ENCODE measurements at regions of chr7 and their contacts with region 1.

Region 1: DNA sequence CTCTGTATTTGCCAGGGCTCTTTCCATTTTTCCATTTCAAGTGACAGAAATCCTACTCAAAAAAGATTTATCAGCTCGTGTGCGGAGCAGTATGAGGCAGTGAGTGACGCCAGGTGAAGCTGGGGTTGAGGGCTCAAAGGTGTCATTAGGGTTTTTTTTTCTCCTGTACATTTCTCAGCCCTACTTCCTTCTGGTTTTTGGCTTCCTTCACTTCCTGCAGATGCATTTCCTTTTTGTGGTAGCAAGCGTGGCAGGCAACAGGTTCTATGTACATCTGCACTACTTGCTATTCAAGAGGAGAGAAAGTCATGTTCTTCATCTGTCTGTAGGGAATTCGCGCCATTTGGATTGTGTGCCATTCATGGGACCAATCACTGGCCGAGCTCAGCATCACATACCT is 52.8 kb upstream of the AOAH start:
- DNase-seq: peak; percentile 62
- H3K4me3 Mint-ChIP-seq: peak overlapping the region; percentile 65
- H3K27ac Mint-ChIP-seq: peak overlapping the region; percentile 80
- H3K4me1 Mint-ChIP-seq: peaks cover 72% of the 10 kb centered on the region
- H3K27me3 Mint-ChIP-seq: peaks cover 11% of the 10 kb centered on the region

Region 2: DNA sequence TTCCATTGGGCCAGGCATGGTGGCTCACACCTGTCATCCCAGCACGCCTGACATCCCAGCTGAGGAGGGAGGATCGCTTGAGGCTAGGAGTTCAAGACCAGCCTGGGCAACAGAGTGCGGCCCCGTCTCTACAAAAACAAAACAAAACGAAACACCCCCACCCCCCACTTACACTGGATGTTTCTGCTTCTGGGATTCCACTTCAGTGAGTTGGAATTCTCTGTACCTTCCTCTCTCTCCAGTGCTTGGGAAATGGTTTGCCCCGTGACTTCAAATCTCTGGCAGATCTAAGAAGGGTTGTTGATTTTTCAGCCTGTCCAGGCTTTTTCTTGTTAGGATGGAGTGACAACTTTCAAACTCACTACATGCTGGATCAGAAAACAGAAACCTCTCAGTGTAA is 280.5 kb before region 1 on chr7:
- CTCF ChIA-PET with region 1: no interaction called
- POLR2A ChIA-PET with region 1: no interaction called
- DNase-seq: no peak
- H3K4me3 Mint-ChIP-seq: no peak overlapping the region
- H3K27ac Mint-ChIP-seq: no peak overlapping the region
- H3K4me1 Mint-ChIP-seq: peaks cover 1% of the 10 kb centered on the region
- H3K27me3 Mint-ChIP-seq: peaks cover 7% of the 10 kb centered on the region

Region 3: DNA sequence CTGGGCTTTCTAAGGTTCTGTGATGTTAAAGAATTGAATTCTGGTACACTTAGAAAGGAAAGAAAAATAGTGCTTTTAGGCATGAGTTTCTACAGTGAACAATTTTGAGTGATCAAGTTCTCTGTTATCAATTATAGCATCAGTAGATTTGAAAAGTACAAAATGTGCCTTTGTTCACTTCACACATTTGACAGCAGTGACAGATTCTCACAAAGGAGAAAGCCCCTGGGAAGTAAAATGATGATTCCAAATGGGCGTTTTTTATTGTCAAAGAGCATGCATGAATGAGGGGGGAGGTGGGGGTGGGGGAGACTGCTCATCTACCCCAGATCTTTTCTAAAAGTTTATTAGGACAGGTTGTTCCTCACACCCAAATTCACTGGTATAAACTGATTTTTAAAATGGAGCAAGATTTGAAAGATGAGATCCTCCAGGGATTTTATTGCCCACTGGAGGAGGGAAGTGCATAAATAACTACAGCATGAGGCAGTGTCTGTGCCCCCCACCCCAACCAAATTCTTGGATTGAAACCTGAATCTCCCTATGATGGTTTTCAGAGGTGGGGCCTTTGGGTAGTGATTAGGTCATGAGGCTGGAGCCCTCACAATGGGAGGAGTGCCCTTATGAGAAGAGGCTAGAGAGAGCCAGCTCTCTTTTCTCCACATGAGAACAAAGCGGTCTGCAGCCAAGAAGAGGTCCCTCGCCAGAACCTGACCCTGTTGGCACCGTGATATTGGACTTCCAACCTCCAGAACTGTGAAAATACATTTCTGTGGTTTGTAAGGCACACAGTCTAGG is 132.2 kb before region 1 on chr7:
- CTCF ChIA-PET with region 1: no interaction called
- POLR2A ChIA-PET with region 1: no interaction called
- DNase-seq: no peak
- H3K4me3 Mint-ChIP-seq: no peak overlapping the region
- H3K27ac Mint-ChIP-seq: no peak overlapping the region
- H3K4me1 Mint-ChIP-seq: peaks cover 21% of the 10 kb centered on the region
- H3K27me3 Mint-ChIP-seq: no peaks in the 10 kb centered on the region

Region 4: DNA sequence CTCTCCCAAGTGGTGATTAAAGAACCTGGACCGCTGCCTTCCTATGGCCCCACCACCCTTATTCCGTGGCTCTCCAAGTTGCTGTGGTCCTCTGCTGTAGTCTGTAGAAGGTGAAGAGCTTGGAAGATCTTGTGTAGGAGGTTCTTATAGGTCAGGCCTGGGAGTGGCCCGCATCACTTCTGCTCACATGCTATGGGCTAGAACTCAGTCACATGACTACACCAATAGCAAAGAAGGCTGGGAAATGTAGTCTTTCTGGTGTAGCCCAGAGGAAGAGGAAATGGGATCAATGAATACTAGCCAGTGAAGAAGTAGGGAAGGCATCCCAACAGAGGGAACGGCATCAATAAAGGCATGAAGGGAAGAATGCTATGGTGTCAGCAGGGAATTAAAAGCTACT is 11.5 kb before region 1 on chr7:
- CTCF ChIA-PET with region 1: interaction called, 3 read pairs
- POLR2A ChIA-PET with region 1: interaction called, 11 read pairs
- DNase-seq: no peak
- H3K4me3 Mint-ChIP-seq: no peak overlapping the region
- H3K27ac Mint-ChIP-seq: no peak overlapping the region
- H3K4me1 Mint-ChIP-seq: peaks cover 13% of the 10 kb centered on the region
- H3K27me3 Mint-ChIP-seq: peaks cover 2% of the 10 kb centered on the region

Region 5: DNA sequence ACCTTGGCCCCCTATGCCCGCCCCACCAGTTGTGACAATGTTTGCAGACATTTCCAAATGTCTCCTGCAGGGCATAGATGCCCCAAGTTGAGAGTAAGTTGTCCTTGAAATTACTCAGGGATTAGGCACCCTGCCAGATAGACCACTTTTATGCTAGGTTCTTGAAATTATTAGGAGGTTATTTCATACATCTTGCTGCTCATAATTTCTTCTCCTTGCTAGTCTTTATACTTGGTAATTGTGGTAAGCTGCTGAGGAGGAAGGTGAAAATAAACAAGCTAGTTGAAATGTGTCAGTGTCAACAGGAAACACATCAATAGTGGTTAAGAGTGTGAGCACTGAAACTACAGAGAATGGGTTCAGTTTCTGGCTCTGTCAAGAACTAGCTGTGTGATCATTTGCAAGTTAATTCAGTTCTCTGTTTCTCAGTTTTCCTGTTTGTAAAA is 10.9 kb after region 1 on chr7:
- CTCF ChIA-PET with region 1: interaction called, 4 read pairs
- POLR2A ChIA-PET with region 1: interaction called, 20 read pairs
- DNase-seq: no peak
- H3K4me3 Mint-ChIP-seq: peak overlapping the region; percentile 4
- H3K27ac Mint-ChIP-seq: peak overlapping the region; percentile 76
- H3K4me1 Mint-ChIP-seq: peaks cover 74% of the 10 kb centered on the region
- H3K27me3 Mint-ChIP-seq: no peaks in the 10 kb centered on the region

Measured in activated CD4-positive, alpha-beta memory T cell treated with anti-CD3 and anti-CD28 coated beads, Interleukin-2, amount 10 ng/mL, durations not matched to agents 7 days and 5 days (primary cell).